ENCODE measurements at regions of chr2 and their contacts with region 1.

Region 1: DNA sequence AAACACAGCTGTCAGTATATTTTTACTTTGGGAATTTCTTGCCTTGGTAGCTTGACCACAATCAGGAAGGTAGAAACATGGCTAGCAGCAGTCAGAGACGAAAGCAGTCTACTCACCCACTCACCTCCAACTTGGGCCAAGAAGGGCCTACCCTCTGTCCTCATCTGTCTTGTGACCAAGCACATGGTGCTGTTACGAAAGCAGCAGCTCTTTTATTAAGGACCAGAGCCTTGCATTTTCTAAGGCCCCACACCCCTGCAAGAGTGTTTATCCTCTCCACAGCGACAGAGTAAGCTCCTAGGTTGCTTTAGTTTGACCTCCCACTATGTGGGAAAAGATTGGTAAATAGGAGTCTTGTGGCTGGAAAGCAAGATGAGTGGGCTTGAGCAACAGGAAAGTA is 31.3 kb upstream of the MSTN start:
- DNase-seq: no peak

Region 2: DNA sequence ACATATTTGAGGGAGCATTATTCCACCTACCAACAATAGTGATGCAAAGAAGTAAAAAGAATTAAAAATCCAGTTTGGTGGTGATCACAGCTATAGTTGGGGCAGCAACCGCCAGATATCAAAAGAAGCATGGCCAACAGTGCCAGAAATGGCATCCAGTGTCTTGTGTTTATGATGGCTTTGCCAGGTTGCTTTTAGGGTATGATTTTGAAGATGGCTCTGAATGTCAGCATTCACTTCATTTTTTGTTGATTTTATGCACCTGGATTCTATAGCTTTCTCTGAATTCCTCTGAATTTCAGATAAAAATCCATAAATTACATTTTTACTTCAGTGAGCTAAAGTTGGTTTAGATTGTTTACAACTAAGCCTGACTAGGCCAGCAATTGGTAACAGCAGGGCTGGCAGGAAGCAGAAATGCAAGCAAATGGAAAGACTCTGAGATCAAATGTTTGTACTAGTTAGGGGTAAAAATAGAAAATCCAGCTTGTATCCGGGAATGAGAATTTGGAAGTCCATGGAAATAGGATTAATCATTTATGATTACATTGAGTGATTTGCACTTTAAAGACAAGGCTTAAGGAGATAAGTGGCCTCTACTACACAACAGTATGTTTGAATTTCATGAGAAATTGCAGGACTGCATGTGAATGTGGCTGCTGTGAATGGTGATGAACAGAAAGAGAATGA is 1079.2 kb before region 1 on chr2:
- intact Hi-C with region 1: no loop called
- DNase-seq: no peak

Region 3: GRCh38 chr2:189943009-189943408 is 150.8 kb before region 1 on chr2:
- intact Hi-C with region 1: no loop called
- DNase-seq: no peak

Region 4: GRCh38 chr2:190121971-190122370 is 28.2 kb after region 1 on chr2:
- intact Hi-C with region 1: no loop called
- DNase-seq: no peak

Region 5: GRCh38 chr2:190137561-190137960 is 43.8 kb after region 1 on chr2:
- intact Hi-C with region 1: no loop called
- DNase-seq: no peak

Region 6: DNA sequence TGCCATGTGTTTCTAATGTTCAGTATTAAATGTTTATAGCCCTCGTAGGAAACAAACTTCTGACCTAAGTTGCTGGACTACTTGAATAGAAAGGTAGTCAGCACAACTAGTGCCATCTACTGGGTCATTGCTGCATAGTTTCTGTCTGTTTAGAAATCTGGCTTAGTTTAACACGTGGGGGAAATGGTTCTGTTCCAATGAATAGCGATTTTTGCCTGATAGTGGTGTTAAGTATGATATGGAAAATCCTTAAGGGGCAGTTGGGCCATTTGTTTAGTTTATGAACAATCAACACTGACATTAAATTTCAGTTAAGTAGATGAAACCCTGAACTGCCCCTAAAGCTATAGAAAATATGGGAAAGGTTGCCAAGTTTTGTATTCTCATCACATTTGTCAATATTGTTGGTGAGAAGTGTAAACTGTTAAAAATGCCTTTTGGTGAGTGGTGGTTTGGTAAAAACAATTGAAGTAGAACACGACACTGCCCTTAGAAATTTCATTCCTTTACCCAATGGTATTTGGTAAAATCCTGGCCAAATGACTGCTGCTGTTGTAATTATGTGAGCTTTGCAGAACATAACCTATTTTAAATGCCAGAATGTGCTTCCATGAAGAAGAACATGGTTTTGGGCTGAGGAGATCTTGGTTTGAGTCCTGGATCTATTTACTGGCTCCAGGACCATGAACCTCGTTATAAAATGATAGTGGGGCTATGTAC is 1597.4 kb after region 1 on chr2:
- intact Hi-C with region 1: loop called in 1 of 2 experiments (anchors 5 kb)
- DNase-seq: no peak

Measured in posterior vena cava (tissue), 2 donors.